Activated CD8-positive, alpha-beta T cell treated with anti-CD3 and anti-CD28 coated beads for 36 hours (primary cell): ENCODE measurements at regions of chr10 and their contacts with region 1.

Region 1: GRCh38 chr10:72331601-72332422 is 22.9 kb downstream of the DNAJB12 start:
- DNase-seq: peak; percentile 98
- ATAC-seq: peak; percentile 70
- H3K4me3 Mint-ChIP-seq: peak overlapping the region; percentile 89
- H3K27ac Mint-ChIP-seq: peak overlapping the region; percentile 97
- H3K4me1 Mint-ChIP-seq: peaks cover 88% of the 10 kb centered on the region
- H3K27me3 Mint-ChIP-seq: peaks cover under 1% of the 10 kb centered on the region
- CTCF ChIP-seq: no peak

Region 2: GRCh38 chr10:72088889-72089575 is 242.8 kb before region 1 on chr10:
- CTCF ChIA-PET with region 1: interaction called, 5 read pairs
- POLR2A ChIA-PET with region 1: interaction called, 11 read pairs
- intact Hi-C with region 1: loop called (anchors 10 kb)
- DNase-seq: peak; percentile 74
- ATAC-seq: peak; percentile 32
- H3K4me3 Mint-ChIP-seq: peak overlapping the region; percentile 96
- H3K27ac Mint-ChIP-seq: peak overlapping the region; percentile 97
- H3K4me1 Mint-ChIP-seq: peaks cover 58% of the 10 kb centered on the region
- H3K27me3 Mint-ChIP-seq: no peaks in the 10 kb centered on the region
- CTCF ChIP-seq: no peak

Region 3: DNA sequence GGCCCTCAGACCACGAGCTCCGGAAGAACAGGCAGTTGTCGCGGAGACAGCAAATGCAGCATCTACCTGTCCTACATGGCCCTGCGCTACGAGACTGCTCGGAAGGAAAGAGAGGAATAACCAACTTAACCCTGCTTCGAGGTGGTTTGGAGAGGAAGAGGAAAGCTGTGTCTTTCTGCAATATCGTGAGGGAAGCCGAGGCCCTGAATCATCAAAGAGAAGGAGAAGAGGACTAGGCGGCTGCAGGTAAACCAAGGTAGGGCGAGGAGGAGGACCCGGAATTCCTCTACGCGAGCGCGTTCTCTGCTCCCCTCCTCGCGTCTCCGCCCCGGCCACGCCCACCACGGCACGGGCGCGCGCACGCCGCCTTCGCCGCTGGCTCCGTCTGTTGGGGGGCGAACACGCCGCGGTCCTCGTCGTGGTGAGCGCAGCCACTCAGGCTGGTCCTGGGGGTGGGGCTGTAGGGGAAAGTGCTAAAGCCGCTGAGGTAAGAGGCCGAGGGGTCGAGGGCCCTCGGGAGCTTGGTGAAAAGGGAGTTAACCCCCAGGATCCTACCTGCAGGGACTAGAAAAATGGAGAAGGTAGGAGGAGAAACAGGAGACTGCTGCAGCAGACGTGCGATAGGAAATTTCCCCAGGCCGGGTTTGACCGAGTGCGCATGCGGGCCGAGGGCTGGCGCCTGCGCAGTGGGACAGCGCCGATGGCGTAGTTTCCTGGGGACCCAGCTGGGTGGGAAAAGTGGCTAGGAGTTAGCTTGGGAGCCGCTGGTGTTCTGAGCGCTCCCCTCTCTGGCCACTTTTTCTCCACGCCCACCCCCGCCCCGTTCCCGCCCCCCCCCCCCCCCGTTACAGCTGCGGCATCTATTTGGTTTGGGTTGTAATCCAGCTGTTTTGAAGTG is 115.9 kb before region 1 on chr10 and contains the starts of genes ANAPC16 and ASCC1:
- CTCF ChIA-PET with region 1: interaction called, 18 read pairs
- POLR2A ChIA-PET with region 1: interaction called, 12 read pairs
- intact Hi-C with region 1: loop called (anchors 5 kb)
- DNase-seq: peak; percentile 94
- ATAC-seq: peak; percentile 85
- H3K4me3 Mint-ChIP-seq: peak within 1 kb of the TSS; percentile 93
- H3K27ac Mint-ChIP-seq: peak within 1 kb of the TSS; percentile 95
- H3K4me1 Mint-ChIP-seq: peaks cover 40% of the 10 kb centered on the region
- H3K27me3 Mint-ChIP-seq: no peaks in the 10 kb centered on the region
- CTCF ChIP-seq: no peak
- total RNA-seq, gene ANAPC16: 94.6 to 101 TPM
- total RNA-seq, gene ASCC1: 61.6 to 66.2 TPM

Region 4: GRCh38 chr10:72260588-72261322 is 71.1 kb before region 1 on chr10:
- CTCF ChIA-PET with region 1: interaction called, 18 read pairs
- POLR2A ChIA-PET with region 1: interaction called, 42 read pairs
- intact Hi-C with region 1: no loop called
- DNase-seq: peak; percentile 96
- ATAC-seq: peak; percentile 82
- H3K4me3 Mint-ChIP-seq: peak overlapping the region; percentile 79
- H3K27ac Mint-ChIP-seq: peak overlapping the region; percentile 96
- H3K4me1 Mint-ChIP-seq: peaks cover 52% of the 10 kb centered on the region
- H3K27me3 Mint-ChIP-seq: no peaks in the 10 kb centered on the region
- CTCF ChIP-seq: no peak

Region 5: GRCh38 chr10:72292223-72292691 is 39.6 kb before region 1 on chr10:
- CTCF ChIA-PET with region 1: interaction called, 25 read pairs
- POLR2A ChIA-PET with region 1: interaction called, 796 read pairs
- intact Hi-C with region 1: loop called (anchors 5 kb)
- DNase-seq: peak; percentile 88
- ATAC-seq: peak; percentile 54
- H3K4me3 Mint-ChIP-seq: peak overlapping the region; percentile 41
- H3K27ac Mint-ChIP-seq: peak overlapping the region; percentile 99
- H3K4me1 Mint-ChIP-seq: peaks cover 55% of the 10 kb centered on the region
- H3K27me3 Mint-ChIP-seq: no peaks in the 10 kb centered on the region
- CTCF ChIP-seq: no peak

Region 6: DNA sequence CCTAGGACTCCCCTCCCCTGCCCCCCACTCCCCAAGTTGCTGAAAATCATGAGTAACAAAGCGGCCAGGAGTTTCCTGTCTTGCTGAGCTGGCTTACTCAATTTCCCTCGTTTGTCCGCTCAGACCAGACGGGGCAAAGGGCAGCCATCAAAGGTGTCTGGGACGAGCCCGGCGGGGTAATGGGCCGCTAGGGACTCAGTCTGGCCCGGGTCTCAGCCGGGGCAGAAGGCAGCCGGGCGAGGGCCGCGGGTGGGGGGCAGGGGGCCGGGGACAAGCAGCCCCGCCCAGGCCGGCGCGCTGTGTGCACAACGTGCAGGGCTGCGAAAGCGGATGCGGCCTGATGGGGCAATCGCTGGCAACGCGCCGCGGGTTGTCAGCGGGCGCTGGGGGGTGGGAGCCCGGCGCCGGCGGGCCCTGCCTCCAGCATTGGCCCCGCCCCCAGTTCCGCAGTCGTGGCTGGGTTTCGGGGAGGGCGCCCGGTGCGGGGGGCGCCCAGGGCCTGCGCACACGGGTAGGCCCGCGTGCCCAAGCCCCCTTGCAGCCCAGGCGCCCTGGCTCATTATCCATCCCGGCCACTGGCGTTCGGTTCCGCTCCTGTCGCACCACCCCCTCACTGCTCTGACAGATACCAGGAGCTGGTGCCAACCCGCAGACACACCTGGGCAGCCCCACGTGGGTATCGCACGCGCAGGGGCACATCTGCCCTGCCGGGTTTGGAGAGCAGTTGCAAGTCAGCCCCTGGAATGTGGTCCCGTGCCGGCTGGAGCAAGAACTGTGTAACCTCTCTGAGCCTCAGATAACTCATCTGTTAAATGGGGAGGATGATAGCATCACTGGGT is 12.2 kb before region 1 on chr10:
- CTCF ChIA-PET with region 1: interaction called, 10 read pairs
- POLR2A ChIA-PET with region 1: interaction called, 129 read pairs
- intact Hi-C with region 1: no loop called
- DNase-seq: peak; percentile 93
- ATAC-seq: peak; percentile 52
- H3K4me3 Mint-ChIP-seq: peak overlapping the region; percentile 86
- H3K27ac Mint-ChIP-seq: peak overlapping the region; percentile 99
- H3K4me1 Mint-ChIP-seq: peaks cover 78% of the 10 kb centered on the region
- H3K27me3 Mint-ChIP-seq: no peaks in the 10 kb centered on the region
- CTCF ChIP-seq: no peak

Region 7: GRCh38 chr10:72466018-72466417 is 134.2 kb after region 1 on chr10:
- CTCF ChIA-PET with region 1: no interaction called
- POLR2A ChIA-PET with region 1: no interaction called
- intact Hi-C with region 1: no loop called
- DNase-seq: no peak
- ATAC-seq: no peak
- H3K4me3 Mint-ChIP-seq: no peak overlapping the region
- H3K27ac Mint-ChIP-seq: no peak overlapping the region
- H3K4me1 Mint-ChIP-seq: peaks cover 2% of the 10 kb centered on the region
- H3K27me3 Mint-ChIP-seq: no peaks in the 10 kb centered on the region
- CTCF ChIP-seq: no peak

Region 8: DNA sequence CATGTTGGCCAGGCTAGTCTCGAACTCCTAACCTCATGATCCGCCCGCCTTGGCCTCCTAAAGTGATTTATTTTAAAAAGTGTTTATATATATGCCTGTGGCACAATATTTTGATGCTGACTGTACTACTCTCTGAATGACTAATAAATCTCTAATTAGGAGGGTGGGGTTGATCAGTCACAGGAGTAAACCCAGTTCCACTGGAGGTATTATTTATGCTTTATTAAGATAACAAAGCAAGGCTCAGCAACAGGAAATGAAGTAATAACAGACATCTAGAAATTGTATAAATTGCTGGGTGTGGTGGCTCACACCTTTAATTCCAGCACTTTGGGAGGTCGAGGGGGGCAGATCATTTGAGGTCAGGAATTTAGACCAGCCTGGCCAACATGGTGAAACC is 334.1 kb after region 1 on chr10:
- CTCF ChIA-PET with region 1: no interaction called
- POLR2A ChIA-PET with region 1: no interaction called
- intact Hi-C with region 1: no loop called
- DNase-seq: no peak
- ATAC-seq: no peak
- H3K4me3 Mint-ChIP-seq: no peak overlapping the region
- H3K27ac Mint-ChIP-seq: no peak overlapping the region
- H3K4me1 Mint-ChIP-seq: no peaks in the 10 kb centered on the region
- H3K27me3 Mint-ChIP-seq: no peaks in the 10 kb centered on the region
- CTCF ChIP-seq: no peak